ENCODE measurements at regions of chr2 and their contacts with region 1.

Region 1: DNA sequence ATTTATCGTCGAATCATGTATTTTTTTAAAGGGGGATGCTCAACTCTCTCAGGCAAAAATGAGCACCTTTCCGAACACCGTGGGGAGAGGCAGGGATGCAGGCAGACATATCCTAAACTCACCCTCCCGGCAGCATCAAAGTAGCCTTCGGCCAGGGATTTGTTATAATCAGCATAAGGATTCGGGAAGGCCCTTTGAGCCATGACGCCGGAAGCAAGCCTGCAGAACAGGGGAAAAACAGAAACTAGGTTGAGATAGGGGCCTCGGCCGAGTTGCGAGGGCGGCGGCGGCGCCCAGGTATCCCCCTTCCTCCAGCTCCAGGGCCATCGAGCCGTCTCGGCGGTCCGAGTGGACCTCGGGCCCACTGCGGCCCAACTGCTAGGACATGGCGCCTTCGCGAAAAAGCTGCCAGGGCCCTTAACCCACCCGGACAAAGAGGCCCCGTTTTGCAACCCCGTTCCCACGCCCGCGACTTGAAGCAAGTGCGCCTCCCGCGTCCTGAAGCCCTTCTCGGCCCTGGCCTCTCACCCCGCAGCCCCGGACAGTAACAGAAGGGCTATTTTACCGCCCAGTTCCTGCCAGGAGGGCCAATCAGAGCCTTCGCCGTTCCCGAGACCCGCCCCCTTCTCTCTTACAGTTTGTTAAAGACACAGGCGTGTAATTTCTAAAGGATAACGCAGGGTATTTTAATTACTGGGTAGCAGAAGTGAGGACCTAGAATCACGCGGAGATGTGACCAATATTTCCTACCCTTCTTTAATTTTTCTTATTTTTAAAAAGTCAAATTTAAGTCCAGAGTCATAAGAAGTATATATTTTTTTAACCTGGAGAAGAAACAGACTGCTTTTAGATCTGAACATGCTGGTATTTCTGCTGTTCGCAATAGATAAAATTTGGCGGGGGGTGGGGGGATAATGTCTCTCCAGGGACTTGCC is at the start of gene LANCL1:
- DNase-seq: peak; percentile 89
- H3K4me3 ChIP-seq: peak within 1 kb of the TSS; percentile 77 to 94 (median 80)
- H3K27ac ChIP-seq: peak within 1 kb of the TSS; percentile 54
- H3K4me1 ChIP-seq: peaks cover 2% of the 10 kb centered on the region
- H3K27me3 ChIP-seq: peaks cover 0 to 2% of the 10 kb centered on the region in 2 experiments
- CTCF ChIP-seq: no peak
- POLR2A ChIP-seq: peak; percentile 68
- total RNA-seq, gene LANCL1: 24.2 and 29.7 TPM in 2 replicates

Region 2: DNA sequence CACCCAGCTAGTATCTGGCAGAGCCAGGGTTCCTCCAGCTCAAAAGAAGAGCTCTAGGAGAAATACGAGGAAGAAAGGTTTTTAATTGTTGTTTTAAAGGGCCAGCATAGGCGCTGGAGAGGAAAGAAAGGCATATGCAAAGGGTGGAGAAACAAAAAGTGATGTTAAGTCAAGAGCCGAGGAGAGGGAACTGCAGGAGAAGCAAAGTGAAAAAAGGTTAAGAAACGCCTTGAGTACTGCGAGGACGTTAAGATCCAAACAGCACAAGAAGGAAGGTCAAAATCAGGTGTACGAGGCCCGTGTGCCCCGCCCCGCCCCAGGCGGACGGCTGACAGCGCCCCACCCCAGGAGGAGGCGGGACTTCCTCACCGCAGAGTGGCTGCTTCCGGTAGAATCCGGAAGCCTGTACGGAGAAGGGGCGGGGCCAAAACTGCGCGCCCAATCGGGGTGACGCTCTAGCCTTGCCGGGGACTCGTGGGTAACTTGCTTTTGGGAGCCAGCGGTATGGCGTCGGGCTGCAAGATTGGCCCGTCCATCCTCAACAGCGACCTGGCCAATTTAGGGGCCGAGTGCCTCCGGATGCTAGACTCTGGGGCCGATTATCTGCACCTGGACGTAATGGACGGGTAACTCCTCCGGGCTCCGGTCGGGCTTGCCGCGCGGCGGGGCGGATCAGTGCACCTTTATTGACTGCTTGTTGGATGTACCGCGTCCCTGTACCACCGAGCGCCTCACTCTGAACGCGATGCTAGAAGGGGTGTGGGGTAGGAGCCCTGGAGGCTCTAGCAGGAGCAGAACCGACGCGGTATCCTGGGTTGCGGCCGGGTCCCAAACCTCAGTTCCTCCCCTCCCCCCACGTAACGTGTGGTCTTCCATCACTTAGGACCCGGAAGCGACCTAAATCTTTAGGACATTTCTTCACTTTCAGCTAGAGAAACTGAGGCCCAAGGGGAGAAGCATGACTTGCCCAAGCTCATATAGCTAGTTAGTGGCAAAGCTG is 474.0 kb before region 1 on chr2 and contains the start of gene RPE:
- CTCF ChIA-PET with region 1: no interaction called
- POLR2A ChIA-PET with region 1: no interaction called
- dilution Hi-C with region 1: no loop called
- intact Hi-C with region 1: loop called (anchors 10 kb)
- DNase-seq: peak; percentile 95
- H3K4me3 ChIP-seq: peak within 1 kb of the TSS; percentile 83 to 98 (median 95)
- H3K27ac ChIP-seq: peak within 1 kb of the TSS; percentile 50
- H3K4me1 ChIP-seq: peaks cover 26% of the 10 kb centered on the region
- H3K27me3 ChIP-seq: no peaks in the 10 kb centered on the region
- CTCF ChIP-seq: no peak
- POLR2A ChIP-seq: peak; percentile 92
- total RNA-seq, gene RPE: 59.7 and 60.7 TPM in 2 replicates

Region 3: DNA sequence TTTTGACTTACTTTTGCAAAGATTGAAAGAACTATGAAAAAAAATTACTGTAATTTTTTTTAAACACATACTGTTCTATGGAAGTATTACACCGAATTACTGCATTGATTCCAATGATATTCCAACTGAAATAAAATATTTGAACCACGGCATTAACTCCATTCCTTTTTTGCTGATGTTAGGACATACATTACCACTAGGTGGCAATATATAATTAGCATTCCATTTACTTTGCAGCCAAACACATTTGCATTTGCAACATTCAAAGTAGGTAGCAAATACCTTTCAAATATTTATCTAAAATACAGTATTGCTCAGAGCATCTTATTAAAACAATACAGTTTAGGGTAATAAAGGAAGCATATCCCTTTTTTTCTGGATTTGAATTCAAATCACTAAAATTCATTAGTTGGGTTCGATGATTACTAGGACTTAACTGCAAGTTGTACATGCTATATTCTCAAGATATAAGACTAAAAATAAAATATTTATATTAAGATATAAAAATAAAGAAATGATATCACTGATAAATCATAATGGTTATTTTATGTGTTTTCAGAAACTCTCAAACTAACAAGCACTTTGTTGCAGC is 31.2 kb before region 1 on chr2:
- CTCF ChIA-PET with region 1: interaction called, 3 read pairs
- POLR2A ChIA-PET with region 1: no interaction called
- dilution Hi-C with region 1: no loop called
- intact Hi-C with region 1: loop called (anchors 2 kb)
- DNase-seq: peak; percentile 34
- H3K4me3 ChIP-seq: no peak overlapping the region
- H3K27ac ChIP-seq: no peak overlapping the region
- H3K4me1 ChIP-seq: no peaks in the 10 kb centered on the region
- H3K27me3 ChIP-seq: no peaks in the 10 kb centered on the region
- CTCF ChIP-seq: peak; percentile 42
- POLR2A ChIP-seq: no peak

Region 4: GRCh38 chr2:210503001-210503623 is 26.7 kb after region 1 on chr2:
- CTCF ChIA-PET with region 1: interaction called, 15 read pairs
- POLR2A ChIA-PET with region 1: no interaction called
- dilution Hi-C with region 1: no loop called
- intact Hi-C with region 1: no loop called
- DNase-seq: peak; percentile 55
- H3K4me3 ChIP-seq: peak overlapping the region in 1 of 3 experiments; percentile 16
- H3K27ac ChIP-seq: no peak overlapping the region
- H3K4me1 ChIP-seq: no peaks in the 10 kb centered on the region
- H3K27me3 ChIP-seq: peaks cover 0 to 8% of the 10 kb centered on the region in 2 experiments
- CTCF ChIP-seq: peak; percentile 76 to 89
- POLR2A ChIP-seq: no peak

Region 5: DNA sequence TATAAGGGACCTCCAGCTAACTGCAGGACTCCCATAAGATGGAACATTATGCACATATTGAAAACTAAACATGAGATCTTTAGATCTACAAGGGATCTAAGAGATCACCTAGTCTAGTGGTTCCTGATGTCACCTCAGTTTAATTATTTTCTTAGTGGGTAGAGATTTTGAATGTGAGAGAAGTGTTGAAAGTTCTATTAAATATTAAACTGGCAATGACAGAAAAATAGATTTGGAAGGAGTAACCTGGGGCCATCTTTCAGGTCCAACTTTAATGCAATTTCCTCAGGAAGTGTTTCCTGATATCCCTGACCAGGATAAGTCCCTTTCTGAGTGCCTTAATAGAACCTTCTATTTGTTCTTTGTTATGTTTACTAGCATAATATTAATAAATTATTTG is 50.8 kb after region 1 on chr2:
- CTCF ChIA-PET with region 1: no interaction called
- POLR2A ChIA-PET with region 1: no interaction called
- dilution Hi-C with region 1: no loop called
- intact Hi-C with region 1: no loop called
- DNase-seq: no peak
- H3K4me3 ChIP-seq: no peak overlapping the region
- H3K27ac ChIP-seq: no peak overlapping the region
- H3K4me1 ChIP-seq: no peaks in the 10 kb centered on the region
- H3K27me3 ChIP-seq: no peaks in the 10 kb centered on the region
- CTCF ChIP-seq: no peak
- POLR2A ChIP-seq: no peak

Region 6: GRCh38 chr2:210663631-210664089 is 187.2 kb after region 1 on chr2:
- CTCF ChIA-PET with region 1: no interaction called
- POLR2A ChIA-PET with region 1: no interaction called
- dilution Hi-C with region 1: no loop called
- intact Hi-C with region 1: no loop called
- DNase-seq: peak; percentile 3
- H3K4me3 ChIP-seq: no peak overlapping the region
- H3K27ac ChIP-seq: no peak overlapping the region
- H3K4me1 ChIP-seq: no peaks in the 10 kb centered on the region
- H3K27me3 ChIP-seq: no peaks in the 10 kb centered on the region
- CTCF ChIP-seq: no peak
- POLR2A ChIP-seq: no peak